HEK293 (cell line): ENCODE measurements at regions of chr12 and their contacts with region 1.

Region 1: GRCh38 chr12:10364815-10365622 is 24.8 kb downstream of the KLRK1 start:
- H3K4me3 ChIP-seq: peak overlapping the region; percentile 74
- H3K27ac ChIP-seq: peak overlapping the region; percentile 95
- H3K4me1 ChIP-seq: peaks cover 20% of the 10 kb centered on the region
- CTCF ChIP-seq: no peak

Region 2: GRCh38 chr12:10268037-10268436 is 97.0 kb before region 1 on chr12:
- CTCF ChIA-PET with region 1: no interaction called
- POLR2A ChIA-PET with region 1: no interaction called
- H3K4me3 ChIP-seq: no peak overlapping the region
- H3K27ac ChIP-seq: no peak overlapping the region
- H3K4me1 ChIP-seq: no peaks in the 10 kb centered on the region
- CTCF ChIP-seq: no peak

Region 3: DNA sequence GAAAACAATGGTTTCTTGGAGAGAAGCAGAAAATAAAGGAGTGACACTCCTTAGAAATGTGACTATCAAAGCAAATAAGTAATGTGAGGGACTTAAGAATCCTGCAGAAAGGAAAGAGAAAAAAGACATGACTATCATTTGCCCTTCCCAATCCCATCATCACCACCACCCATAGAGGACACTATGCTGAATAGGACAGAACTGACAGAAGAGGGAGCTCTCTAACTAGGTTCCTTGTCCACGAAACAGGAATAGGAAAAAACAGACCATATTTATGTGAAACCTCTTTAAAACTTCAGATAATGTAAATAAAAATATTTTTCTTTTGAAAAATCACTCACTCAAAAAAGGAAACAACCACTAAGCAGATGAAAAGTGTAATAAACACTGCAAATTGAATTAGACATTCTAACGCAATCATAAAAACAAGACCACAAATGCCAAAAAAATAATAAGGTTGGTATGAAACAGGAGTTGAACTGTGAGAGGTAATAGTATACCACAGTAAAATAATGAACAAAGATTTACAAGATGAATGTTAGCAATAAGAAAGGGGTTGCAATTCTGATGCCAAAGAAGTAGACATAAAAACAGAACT is 33.3 kb before region 1 on chr12:
- CTCF ChIA-PET with region 1: interaction called, 11 read pairs
- POLR2A ChIA-PET with region 1: no interaction called
- H3K4me3 ChIP-seq: no peak overlapping the region
- H3K27ac ChIP-seq: no peak overlapping the region
- H3K4me1 ChIP-seq: no peaks in the 10 kb centered on the region
- CTCF ChIP-seq: peak; percentile 95

Region 4: GRCh38 chr12:10392394-10392930 is 27.4 kb after region 1 on chr12:
- CTCF ChIA-PET with region 1: interaction called, 6 read pairs
- POLR2A ChIA-PET with region 1: interaction called, 12 read pairs
- H3K4me3 ChIP-seq: no peak overlapping the region
- H3K27ac ChIP-seq: peak overlapping the region; percentile 21; the same call in 1 of the 2 replicates
- H3K4me1 ChIP-seq: peaks cover 22% of the 10 kb centered on the region
- CTCF ChIP-seq: no peak

Region 5: GRCh38 chr12:10562306-10562933 is 197.4 kb after region 1 on chr12:
- CTCF ChIA-PET with region 1: interaction called, 10 read pairs
- POLR2A ChIA-PET with region 1: no interaction called
- H3K4me3 ChIP-seq: no peak overlapping the region
- H3K27ac ChIP-seq: no peak overlapping the region
- H3K4me1 ChIP-seq: no peaks in the 10 kb centered on the region
- CTCF ChIP-seq: no peak

Region 6: DNA sequence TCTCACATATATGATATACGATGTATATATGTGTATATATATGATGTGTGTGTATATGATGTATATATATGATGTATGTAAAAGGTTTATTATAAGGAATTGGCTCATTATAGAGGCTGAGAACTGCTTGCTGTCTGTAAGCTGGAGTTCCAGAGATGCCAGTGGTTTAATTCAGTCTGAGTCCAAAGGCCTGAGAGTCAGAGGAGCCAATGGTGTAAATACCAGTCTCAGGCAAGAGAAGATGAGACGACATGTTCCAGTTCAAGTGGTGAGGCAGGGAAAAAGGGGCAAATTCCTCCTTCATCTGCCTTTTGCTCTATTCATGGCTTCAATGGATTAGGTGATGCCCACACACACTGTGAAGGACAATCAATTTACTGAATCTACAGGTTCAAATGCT is 325.9 kb after region 1 on chr12:
- CTCF ChIA-PET with region 1: no interaction called
- POLR2A ChIA-PET with region 1: no interaction called
- H3K4me3 ChIP-seq: no peak overlapping the region
- H3K27ac ChIP-seq: no peak overlapping the region
- H3K4me1 ChIP-seq: no peaks in the 10 kb centered on the region
- CTCF ChIP-seq: no peak